CD4-positive, alpha-beta memory T cell (primary cell): ENCODE measurements at regions of chr5 and their contacts with region 1.

Region 1: DNA sequence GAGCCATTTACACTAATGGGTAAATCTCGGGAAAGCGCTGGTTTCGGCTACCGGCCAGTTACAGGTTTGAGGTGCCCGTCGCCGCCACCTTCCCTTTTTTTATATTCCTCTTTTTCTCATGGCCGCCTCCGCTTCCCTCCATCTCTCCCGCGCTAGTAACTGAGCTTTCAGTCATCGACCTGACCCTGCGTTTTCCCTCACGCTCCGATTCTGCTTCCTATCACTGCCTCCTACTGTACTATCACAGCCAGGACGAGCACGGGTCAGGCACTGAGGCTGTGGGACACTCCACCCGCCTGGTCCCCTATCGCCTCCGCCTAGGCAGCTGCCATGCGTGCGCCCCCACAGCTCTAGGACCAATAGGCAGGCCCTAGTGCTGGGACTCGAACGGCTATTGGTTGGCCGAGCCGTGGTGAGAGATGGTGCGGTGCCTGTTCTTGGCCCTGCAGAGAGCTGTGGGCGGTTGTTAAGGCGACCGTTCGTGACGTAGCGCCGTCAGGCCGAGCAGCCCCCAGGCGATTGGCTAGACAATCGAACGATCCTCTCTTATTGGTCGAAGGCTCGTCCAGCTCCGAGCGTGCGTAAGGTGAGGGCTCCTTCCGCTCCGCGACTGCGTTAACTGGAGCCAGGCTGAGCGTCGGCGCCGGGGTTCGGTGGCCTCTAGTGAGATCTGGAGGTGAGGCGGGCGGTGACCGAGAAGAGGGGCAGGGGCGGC is at the start of gene HMGCR:
- DNase-seq: peak; percentile 95 to 98 (median 97)
- H3K4me3 ChIP-seq: peak within 1 kb of the TSS; percentile 90
- H3K4me3 Mint-ChIP-seq: no peak within 1 kb of the TSS
- H3K27ac ChIP-seq: peak within 1 kb of the TSS; percentile 72
- H3K27ac Mint-ChIP-seq: peak within 1 kb of the TSS in 1 of 7 donors; percentile 96
- H3K4me1 ChIP-seq: peaks cover 26% of the 10 kb centered on the region
- H3K4me1 Mint-ChIP-seq: peaks cover 27 to 39% (median 29%) of the 10 kb centered on the region in 4 donors
- H3K27me3 ChIP-seq: no peaks in the 10 kb centered on the region
- H3K27me3 Mint-ChIP-seq: no peaks in the 10 kb centered on the region
- total RNA-seq, gene HMGCR: 39.6 to 43.0 TPM

Region 2: GRCh38 chr5:73565139-73565968 is 1771.4 kb before region 1 on chr5 and contains the starts of genes ANKRA2 and UTP15:
- CTCF ChIA-PET with region 1: no interaction called
- POLR2A ChIA-PET with region 1: no interaction called
- intact Hi-C with region 1: loop called (anchors 5 kb)
- DNase-seq: peak; percentile 96 to 98 (median 97)
- H3K4me3 ChIP-seq: peak within 1 kb of the TSS; percentile 45 to 83
- H3K4me3 Mint-ChIP-seq: peak within 1 kb of the TSS; percentile 95 to 100 (median 99)
- H3K27ac ChIP-seq: peak within 1 kb of the TSS; percentile 99
- H3K27ac Mint-ChIP-seq: peak within 1 kb of the TSS; percentile 98 to 100 (median 99)
- H3K4me1 ChIP-seq: peaks cover 35% of the 10 kb centered on the region
- H3K4me1 Mint-ChIP-seq: peaks cover 26 to 53% (median 39%) of the 10 kb centered on the region in 4 donors
- H3K27me3 ChIP-seq: no peaks in the 10 kb centered on the region
- H3K27me3 Mint-ChIP-seq: no peaks in the 10 kb centered on the region
- total RNA-seq, gene ANKRA2: 51.9 to 59.4 TPM
- total RNA-seq, gene UTP15: 22.6 to 22.7 TPM

Region 3: DNA sequence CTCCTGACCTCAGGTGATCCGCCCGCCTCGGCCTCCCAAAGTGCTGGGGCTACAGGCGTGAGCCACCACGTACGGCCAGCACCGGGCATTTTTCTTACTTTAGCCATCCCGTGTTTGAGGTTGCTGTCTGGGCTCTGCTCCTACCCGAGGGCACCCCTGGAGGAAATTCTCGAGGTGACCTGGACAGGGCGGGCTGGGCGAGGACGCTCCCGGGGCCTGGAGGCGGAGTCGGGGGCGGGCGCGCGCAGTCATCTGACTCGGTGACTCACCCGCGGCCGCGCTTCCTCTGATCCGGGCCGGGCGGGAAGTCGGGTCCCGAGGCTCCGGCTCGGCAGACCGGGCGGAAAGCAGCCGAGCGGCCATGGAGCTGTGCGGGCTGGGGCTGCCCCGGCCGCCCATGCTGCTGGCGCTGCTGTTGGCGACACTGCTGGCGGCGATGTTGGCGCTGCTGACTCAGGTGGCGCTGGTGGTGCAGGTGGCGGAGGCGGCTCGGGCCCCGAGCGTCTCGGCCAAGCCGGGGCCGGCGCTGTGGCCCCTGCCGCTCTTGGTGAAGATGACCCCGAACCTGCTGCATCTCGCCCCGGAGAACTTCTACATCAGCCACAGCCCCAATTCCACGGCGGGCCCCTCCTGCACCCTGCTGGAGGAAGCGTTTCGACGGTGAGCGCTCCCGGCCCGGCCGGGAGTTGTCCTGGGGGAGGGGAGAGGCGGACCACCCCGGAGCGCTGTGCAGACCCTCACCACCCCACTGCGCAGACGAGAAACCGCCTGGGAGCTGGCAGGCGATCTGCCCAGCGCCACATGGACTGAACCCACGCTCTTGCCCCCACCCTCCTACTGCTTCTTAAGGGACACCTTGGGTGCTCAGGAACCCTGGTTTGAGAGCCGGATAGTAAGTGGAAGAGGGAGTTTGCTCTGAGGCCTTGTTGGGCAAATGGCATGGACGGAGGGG is 651.6 kb before region 1 on chr5 and contains the start of gene HEXB:
- CTCF ChIA-PET with region 1: no interaction called
- POLR2A ChIA-PET with region 1: no interaction called
- intact Hi-C with region 1: loop called (anchors 2 kb)
- DNase-seq: peak; percentile 72 to 83 (median 78)
- H3K4me3 ChIP-seq: peak within 1 kb of the TSS; percentile 61 to 71
- H3K4me3 Mint-ChIP-seq: peak within 1 kb of the TSS; percentile 79 to 92 (median 88)
- H3K27ac ChIP-seq: peak within 1 kb of the TSS; percentile 73
- H3K27ac Mint-ChIP-seq: peak within 1 kb of the TSS; percentile 68 to 92 (median 84)
- H3K4me1 ChIP-seq: peaks cover 26% of the 10 kb centered on the region
- H3K4me1 Mint-ChIP-seq: peaks cover 22 to 35% (median 26%) of the 10 kb centered on the region in 4 donors
- H3K27me3 ChIP-seq: peaks cover 3% of the 10 kb centered on the region
- H3K27me3 Mint-ChIP-seq: no peaks in the 10 kb centered on the region
- total RNA-seq, gene HEXB: 62.3 to 70.9 TPM

Region 4: GRCh38 chr5:74934949-74935751 is 401.6 kb before region 1 on chr5:
- CTCF ChIA-PET with region 1: interaction called, 6 read pairs
- POLR2A ChIA-PET with region 1: interaction called, 3 read pairs
- intact Hi-C with region 1: loop called (anchors 10 kb)
- DNase-seq: peak in 4 of 5 donors; percentile 25 to 43 (median 30)
- H3K4me3 ChIP-seq: peak overlapping the region; percentile 2 to 8
- H3K4me3 Mint-ChIP-seq: peak overlapping the region; percentile 65 to 82 (median 74)
- H3K27ac ChIP-seq: peak overlapping the region; percentile 17
- H3K27ac Mint-ChIP-seq: peak overlapping the region; percentile 30 to 92 (median 64)
- H3K4me1 ChIP-seq: peaks cover 19% of the 10 kb centered on the region
- H3K4me1 Mint-ChIP-seq: peaks cover 16 to 30% (median 27%) of the 10 kb centered on the region in 4 donors
- H3K27me3 ChIP-seq: no peaks in the 10 kb centered on the region
- H3K27me3 Mint-ChIP-seq: no peaks in the 10 kb centered on the region

Region 5: DNA sequence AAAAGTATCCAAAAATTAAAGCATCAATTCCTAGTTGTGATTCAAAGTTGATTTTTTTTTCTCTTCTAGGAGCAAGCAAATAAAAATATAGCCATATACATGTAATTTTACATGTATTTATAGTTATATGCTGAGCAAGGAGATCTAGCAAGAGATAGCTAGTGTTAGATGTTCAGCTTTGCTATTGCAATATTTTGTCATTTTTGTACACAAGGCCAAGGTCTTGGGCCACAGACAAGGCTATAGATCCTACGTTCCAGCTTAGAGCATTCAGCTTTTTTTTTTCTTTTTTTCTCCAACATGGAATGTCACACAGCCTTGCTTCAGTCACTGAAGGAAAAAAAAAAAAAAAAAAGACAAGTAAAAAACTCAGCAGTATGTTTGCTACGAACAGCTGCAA is 37.1 kb after region 1 on chr5:
- CTCF ChIA-PET with region 1: no interaction called
- POLR2A ChIA-PET with region 1: no interaction called
- intact Hi-C with region 1: no loop called
- DNase-seq: no peak
- H3K4me3 ChIP-seq: no peak overlapping the region
- H3K4me3 Mint-ChIP-seq: no peak overlapping the region
- H3K27ac ChIP-seq: no peak overlapping the region
- H3K27ac Mint-ChIP-seq: no peak overlapping the region
- H3K4me1 ChIP-seq: no peaks in the 10 kb centered on the region
- H3K4me1 Mint-ChIP-seq: peaks cover 0 to 2% (median 0%) of the 10 kb centered on the region in 4 donors
- H3K27me3 ChIP-seq: no peaks in the 10 kb centered on the region
- H3K27me3 Mint-ChIP-seq: no peaks in the 10 kb centered on the region

Region 6: DNA sequence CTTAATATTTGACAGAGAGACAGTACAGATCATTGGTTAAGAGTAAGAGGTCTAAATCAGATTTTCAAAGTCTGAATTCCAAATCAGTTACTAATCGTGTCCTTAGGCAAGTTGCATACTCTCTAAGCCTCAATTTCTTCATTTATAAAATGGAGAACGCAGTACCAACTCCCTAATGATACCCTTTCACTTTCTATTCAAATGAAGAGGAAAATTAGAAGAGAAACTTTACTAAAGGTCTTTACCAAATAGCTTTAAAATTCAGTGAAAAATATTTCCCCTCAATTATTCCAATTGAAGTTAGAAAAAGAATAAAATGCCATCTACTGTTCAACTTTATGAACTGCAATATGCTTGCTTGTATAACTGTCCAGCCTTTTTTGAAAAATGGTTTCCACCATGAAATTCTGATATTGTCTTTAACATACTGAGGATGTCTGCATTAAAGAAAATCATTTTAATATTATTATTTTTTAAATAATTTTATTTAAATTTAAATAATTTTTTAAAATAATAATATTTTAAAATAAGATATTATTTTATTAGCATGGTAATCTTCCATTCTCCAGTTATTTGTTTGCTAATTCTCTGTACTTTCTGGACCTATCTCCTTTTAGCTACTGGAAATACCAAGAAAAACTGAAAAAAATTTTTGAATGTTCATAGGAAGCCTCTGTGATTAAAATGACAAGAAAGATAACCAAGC is 344.5 kb after region 1 on chr5:
- CTCF ChIA-PET with region 1: interaction called, 5 read pairs
- POLR2A ChIA-PET with region 1: interaction called, 4 read pairs
- intact Hi-C with region 1: loop called (anchors 5 kb)
- DNase-seq: peak in 4 of 5 donors; percentile 26 to 39 (median 34)
- H3K4me3 ChIP-seq: no peak overlapping the region
- H3K4me3 Mint-ChIP-seq: no peak overlapping the region
- H3K27ac ChIP-seq: no peak overlapping the region
- H3K27ac Mint-ChIP-seq: peak overlapping the region in 1 of 7 donors; percentile 29
- H3K4me1 ChIP-seq: peaks cover 5% of the 10 kb centered on the region
- H3K4me1 Mint-ChIP-seq: peaks cover 5 to 11% (median 9%) of the 10 kb centered on the region in 4 donors
- H3K27me3 ChIP-seq: no peaks in the 10 kb centered on the region
- H3K27me3 Mint-ChIP-seq: no peaks in the 10 kb centered on the region

Region 7: GRCh38 chr5:75717082-75717922 is 380.5 kb after region 1 on chr5 and contains the start of gene POC5:
- CTCF ChIA-PET with region 1: no interaction called
- POLR2A ChIA-PET with region 1: interaction called, 7 read pairs
- intact Hi-C with region 1: loop called (anchors 1 kb)
- DNase-seq: peak; percentile 98 to 99 (median 98)
- H3K4me3 ChIP-seq: peak within 1 kb of the TSS; percentile 74 to 95
- H3K4me3 Mint-ChIP-seq: peak within 1 kb of the TSS; percentile 99 to 100 (median 100)
- H3K27ac ChIP-seq: peak within 1 kb of the TSS; percentile 74
- H3K27ac Mint-ChIP-seq: peak within 1 kb of the TSS; percentile 98 to 100 (median 99)
- H3K4me1 ChIP-seq: peaks cover 18% of the 10 kb centered on the region
- H3K4me1 Mint-ChIP-seq: peaks cover 29 to 43% (median 36%) of the 10 kb centered on the region in 4 donors
- H3K27me3 ChIP-seq: no peaks in the 10 kb centered on the region
- H3K27me3 Mint-ChIP-seq: no peaks in the 10 kb centered on the region
- total RNA-seq, gene POC5: 15.1 to 20.0 TPM